ENCODE measurements at regions of chr11 and their contacts with region 1.

Region 1: GRCh38 chr11:75867775-75868374 is 52.9 kb downstream of the UVRAG start:
- DNase-seq: peak; percentile 31
- ATAC-seq: peak; percentile 74
- H3K4me3 ChIP-seq: no peak overlapping the region
- H3K27ac ChIP-seq: no peak overlapping the region
- H3K4me1 ChIP-seq: no peaks in the 10 kb centered on the region
- H3K27me3 ChIP-seq: no peaks in the 10 kb centered on the region
- CTCF ChIP-seq: peak; percentile 57 to 88 (median 79)
- POLR2A ChIP-seq: no peak
- RAD21 ChIP-seq: peak; percentile 78

Region 2: GRCh38 chr11:75388386-75389275 is 479.2 kb before region 1 on chr11:
- CTCF ChIA-PET with region 1: no interaction called
- POLR2A ChIA-PET with region 1: no interaction called
- RAD21 ChIA-PET with region 1: no interaction called
- intact Hi-C with region 1: loop called (anchors 5 kb)
- DNase-seq: peak; percentile 81
- ATAC-seq: peak; percentile 78
- H3K4me3 ChIP-seq: no peak overlapping the region
- H3K27ac ChIP-seq: peak overlapping the region; percentile 8; the same call in 1 of the 2 replicates
- H3K4me1 ChIP-seq: peaks cover 23 to 48% of the 10 kb centered on the region in 2 experiments
- H3K27me3 ChIP-seq: no peaks in the 10 kb centered on the region
- CTCF ChIP-seq: peak; percentile 77 to 89 (median 88)
- POLR2A ChIP-seq: no peak
- RAD21 ChIP-seq: peak; percentile 93

Region 3: GRCh38 chr11:75445315-75445953 is 422.4 kb before region 1 on chr11:
- CTCF ChIA-PET with region 1: no interaction called
- POLR2A ChIA-PET with region 1: no interaction called
- RAD21 ChIA-PET with region 1: no interaction called
- intact Hi-C with region 1: loop called (anchors 10 kb)
- DNase-seq: peak; percentile 22
- ATAC-seq: peak; percentile 91
- H3K4me3 ChIP-seq: no peak overlapping the region
- H3K27ac ChIP-seq: no peak overlapping the region
- H3K4me1 ChIP-seq: no peaks in the 10 kb centered on the region
- H3K27me3 ChIP-seq: no peaks in the 10 kb centered on the region
- CTCF ChIP-seq: peak; percentile 91 to 98 (median 93)
- POLR2A ChIP-seq: no peak
- RAD21 ChIP-seq: peak; percentile 98

Region 4: DNA sequence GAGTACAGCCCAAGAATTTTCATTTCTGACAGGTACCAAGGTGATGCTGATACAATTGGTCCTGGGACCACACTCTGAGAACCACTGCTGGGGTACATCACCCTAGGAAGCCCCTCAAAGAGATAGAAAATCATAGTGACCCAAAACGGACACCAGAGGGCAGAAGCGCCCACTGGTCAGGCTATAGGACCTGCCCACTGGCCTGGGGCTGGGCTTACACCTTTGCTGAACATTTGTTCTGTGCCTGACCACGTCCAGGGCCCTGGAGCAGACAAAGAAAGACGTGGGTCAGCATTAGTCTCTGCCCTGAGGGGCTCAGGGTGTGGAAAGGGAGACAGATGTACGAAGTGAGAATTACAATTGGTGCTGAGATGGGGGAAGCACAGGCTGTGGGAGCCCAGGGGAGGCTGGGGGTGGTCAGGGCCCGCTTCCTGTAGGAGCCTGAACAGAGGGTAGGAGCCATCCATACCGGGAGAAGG is 320.3 kb before region 1 on chr11:
- CTCF ChIA-PET with region 1: no interaction called
- POLR2A ChIA-PET with region 1: no interaction called
- RAD21 ChIA-PET with region 1: no interaction called
- intact Hi-C with region 1: loop called (anchors 5 kb)
- DNase-seq: no peak
- ATAC-seq: peak; percentile 95
- H3K4me3 ChIP-seq: no peak overlapping the region
- H3K27ac ChIP-seq: no peak overlapping the region
- H3K4me1 ChIP-seq: peaks cover 0 to 8% of the 10 kb centered on the region in 2 experiments; a peak in 2 of 4 replicates
- H3K27me3 ChIP-seq: no peaks in the 10 kb centered on the region
- CTCF ChIP-seq: peak; percentile 80 to 93 (median 86); a peak in 5 of 6 replicates
- POLR2A ChIP-seq: no peak
- RAD21 ChIP-seq: peak; percentile 90

Region 5: GRCh38 chr11:75721855-75722668 is 145.8 kb before region 1 on chr11:
- CTCF ChIA-PET with region 1: interaction called, 17 read pairs
- POLR2A ChIA-PET with region 1: no interaction called
- RAD21 ChIA-PET with region 1: interaction called in 1 of 2 experiments, 6 read pairs
- intact Hi-C with region 1: loop called (anchors 1 kb)
- DNase-seq: no peak
- ATAC-seq: no peak
- H3K4me3 ChIP-seq: no peak overlapping the region
- H3K27ac ChIP-seq: no peak overlapping the region
- H3K4me1 ChIP-seq: peaks cover 0 to 4% of the 10 kb centered on the region in 2 experiments; a peak in 1 of 4 replicates
- H3K27me3 ChIP-seq: no peaks in the 10 kb centered on the region
- CTCF ChIP-seq: no peak
- POLR2A ChIP-seq: no peak
- RAD21 ChIP-seq: no peak

Region 6: DNA sequence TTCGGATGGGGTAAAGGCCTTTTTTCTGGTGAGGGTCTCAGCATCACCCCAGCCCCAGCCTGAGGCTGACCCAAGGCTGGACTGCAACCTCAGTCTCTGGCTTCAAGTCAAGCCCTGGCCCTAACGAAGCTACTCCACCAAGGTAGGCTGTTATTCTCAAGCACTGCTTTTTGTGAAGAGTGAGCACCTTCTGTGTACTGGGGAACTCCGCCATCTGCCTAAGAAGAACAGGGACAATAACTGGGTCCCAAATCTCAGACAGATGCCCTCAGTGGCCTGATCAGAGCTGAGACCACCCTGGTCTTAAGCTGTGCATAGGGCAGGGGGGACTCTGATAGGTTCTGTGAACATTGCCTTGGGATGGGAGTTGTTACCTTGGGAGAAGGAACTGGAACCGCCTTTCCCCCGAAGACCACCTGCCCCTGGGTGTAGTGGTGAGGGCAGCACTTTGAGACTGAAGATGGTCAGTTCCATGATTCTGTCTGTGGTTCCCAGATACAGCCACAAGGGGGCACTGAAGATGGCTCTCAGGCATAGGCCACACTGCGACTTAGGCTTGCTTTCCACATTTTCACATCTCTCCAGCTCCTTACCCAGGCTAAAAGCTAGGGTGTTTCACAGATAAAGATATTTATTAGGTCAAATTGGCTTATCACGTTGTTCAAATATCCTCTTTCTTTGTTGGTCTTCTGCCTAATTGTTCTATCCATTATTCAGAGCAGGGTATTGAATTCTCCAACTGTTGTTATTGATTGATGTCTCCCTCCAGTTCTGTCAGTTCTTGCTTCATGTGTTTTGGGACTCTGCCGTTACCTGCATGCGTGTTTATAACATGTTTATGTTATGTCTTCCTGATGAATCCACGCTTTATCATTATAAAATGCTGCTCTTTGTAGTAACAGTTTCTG is 64.7 kb before region 1 on chr11:
- CTCF ChIA-PET with region 1: interaction called, 30 read pairs
- POLR2A ChIA-PET with region 1: no interaction called
- RAD21 ChIA-PET with region 1: interaction called in 1 of 2 experiments, 4 read pairs
- intact Hi-C with region 1: loop called (anchors 1 kb)
- DNase-seq: peak; percentile 46
- ATAC-seq: peak; percentile 98
- H3K4me3 ChIP-seq: no peak overlapping the region
- H3K27ac ChIP-seq: no peak overlapping the region
- H3K4me1 ChIP-seq: no peaks in the 10 kb centered on the region
- H3K27me3 ChIP-seq: no peaks in the 10 kb centered on the region
- CTCF ChIP-seq: peak; percentile 77 to 93 (median 89)
- POLR2A ChIP-seq: no peak
- RAD21 ChIP-seq: peak; percentile 80

Measured in HCT116 (cell line).